ENCODE measurements at regions of chr4 and their contacts with region 1.

Region 1: DNA sequence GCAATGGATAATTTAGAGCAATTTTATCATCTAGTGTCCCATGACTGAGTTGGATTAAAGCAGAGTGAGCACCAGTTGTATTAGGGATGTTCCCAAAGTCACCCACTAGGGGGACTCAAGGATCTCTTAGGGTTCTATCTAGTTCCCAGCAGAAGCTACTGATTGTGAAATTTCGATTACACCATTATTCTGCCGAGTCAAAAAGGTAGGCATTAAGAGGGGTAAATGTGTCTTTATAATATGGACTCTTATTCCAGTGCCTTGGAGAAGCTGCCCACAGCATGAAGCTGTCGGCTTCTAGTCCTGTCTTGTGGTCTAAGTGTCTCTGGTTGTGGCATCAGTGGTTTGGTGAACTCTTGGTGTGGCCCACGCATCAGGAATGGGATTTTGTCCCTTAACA is 53.3 kb downstream of the RGS12 start:
- DNase-seq: peak in 5 of 9 experiments; percentile 22 to 76 (median 45)
- ATAC-seq: peak; percentile 67
- H3K4me3 ChIP-seq: no peak overlapping the region
- H3K4me3 Mint-ChIP-seq: no peak overlapping the region
- H3K27ac ChIP-seq: no peak overlapping the region
- H3K27ac Mint-ChIP-seq: no peak overlapping the region
- H3K4me1 ChIP-seq: peaks cover 19% of the 10 kb centered on the region
- H3K4me1 Mint-ChIP-seq: peaks cover 27% of the 10 kb centered on the region
- H3K27me3 ChIP-seq: no peaks in the 10 kb centered on the region
- H3K27me3 Mint-ChIP-seq: peaks cover 6% of the 10 kb centered on the region
- CTCF ChIP-seq: peak; percentile 89

Region 2: GRCh38 chr4:3091464-3091863 is 254.7 kb before region 1 on chr4:
- CTCF ChIA-PET with region 1: no interaction called
- POLR2A ChIA-PET with region 1: no interaction called
- intact Hi-C with region 1: no loop called
- DNase-seq: no peak
- ATAC-seq: no peak
- H3K4me3 ChIP-seq: no peak overlapping the region
- H3K4me3 Mint-ChIP-seq: no peak overlapping the region
- H3K27ac ChIP-seq: no peak overlapping the region
- H3K27ac Mint-ChIP-seq: no peak overlapping the region
- H3K4me1 ChIP-seq: no peaks in the 10 kb centered on the region
- H3K4me1 Mint-ChIP-seq: peaks cover 5% of the 10 kb centered on the region
- H3K27me3 ChIP-seq: no peaks in the 10 kb centered on the region
- H3K27me3 Mint-ChIP-seq: no peaks in the 10 kb centered on the region
- CTCF ChIP-seq: no peak

Region 3: GRCh38 chr4:3201718-3202702 is 144.1 kb before region 1 on chr4:
- CTCF ChIA-PET with region 1: interaction called, 6 read pairs
- POLR2A ChIA-PET with region 1: no interaction called
- intact Hi-C with region 1: loop called in 1 of 2 experiments (anchors 5 kb)
- DNase-seq: peak; percentile 36 to 92 (median 77)
- ATAC-seq: peak; percentile 95
- H3K4me3 ChIP-seq: peak overlapping the region; percentile 10 to 31
- H3K4me3 Mint-ChIP-seq: peak overlapping the region; percentile 70
- H3K27ac ChIP-seq: peak overlapping the region in 1 of 2 experiments; percentile 81
- H3K27ac Mint-ChIP-seq: peak overlapping the region; percentile 74
- H3K4me1 ChIP-seq: peaks cover 43% of the 10 kb centered on the region
- H3K4me1 Mint-ChIP-seq: peaks cover 56% of the 10 kb centered on the region
- H3K27me3 ChIP-seq: no peaks in the 10 kb centered on the region
- H3K27me3 Mint-ChIP-seq: no peaks in the 10 kb centered on the region
- CTCF ChIP-seq: no peak

Region 4: GRCh38 chr4:3369781-3370674 is 23.9 kb after region 1 on chr4:
- CTCF ChIA-PET with region 1: interaction called, 10 read pairs
- POLR2A ChIA-PET with region 1: no interaction called
- intact Hi-C with region 1: no loop called
- DNase-seq: peak in 4 of 9 experiments; percentile 30 to 79 (median 48)
- ATAC-seq: peak; percentile 30
- H3K4me3 ChIP-seq: peak overlapping the region; percentile 21 to 34
- H3K4me3 Mint-ChIP-seq: peak overlapping the region; percentile 75
- H3K27ac ChIP-seq: no peak overlapping the region
- H3K27ac Mint-ChIP-seq: no peak overlapping the region
- H3K4me1 ChIP-seq: peaks cover 28% of the 10 kb centered on the region
- H3K4me1 Mint-ChIP-seq: peaks cover 35% of the 10 kb centered on the region
- H3K27me3 ChIP-seq: peaks cover 9 to 12% of the 10 kb centered on the region in 2 experiments
- H3K27me3 Mint-ChIP-seq: peaks cover 21% of the 10 kb centered on the region
- CTCF ChIP-seq: no peak

Region 5: GRCh38 chr4:3480528-3481112 is 134.5 kb after region 1 on chr4:
- CTCF ChIA-PET with region 1: interaction called, 3 read pairs
- POLR2A ChIA-PET with region 1: no interaction called
- intact Hi-C with region 1: loop called (anchors 1 kb)
- DNase-seq: peak; percentile 58 to 84 (median 68)
- ATAC-seq: peak; percentile 85
- H3K4me3 ChIP-seq: no peak overlapping the region
- H3K4me3 Mint-ChIP-seq: no peak overlapping the region
- H3K27ac ChIP-seq: no peak overlapping the region
- H3K27ac Mint-ChIP-seq: no peak overlapping the region
- H3K4me1 ChIP-seq: peaks cover 13% of the 10 kb centered on the region
- H3K4me1 Mint-ChIP-seq: peaks cover 2% of the 10 kb centered on the region
- H3K27me3 ChIP-seq: peaks cover 12 to 13% of the 10 kb centered on the region in 2 experiments
- H3K27me3 Mint-ChIP-seq: peaks cover 13% of the 10 kb centered on the region
- CTCF ChIP-seq: peak; percentile 77

Region 6: GRCh38 chr4:4260253-4260652 is 914.1 kb after region 1 on chr4:
- CTCF ChIA-PET with region 1: no interaction called
- POLR2A ChIA-PET with region 1: no interaction called
- intact Hi-C with region 1: no loop called
- DNase-seq: peak in 3 of 9 experiments; percentile 16 to 86 (median 81)
- ATAC-seq: peak; percentile 100
- H3K4me3 ChIP-seq: no peak overlapping the region
- H3K4me3 Mint-ChIP-seq: no peak overlapping the region
- H3K27ac ChIP-seq: no peak overlapping the region
- H3K27ac Mint-ChIP-seq: peak overlapping the region; percentile 56
- H3K4me1 ChIP-seq: no peaks in the 10 kb centered on the region
- H3K4me1 Mint-ChIP-seq: peaks cover 13% of the 10 kb centered on the region
- H3K27me3 ChIP-seq: no peaks in the 10 kb centered on the region
- H3K27me3 Mint-ChIP-seq: no peaks in the 10 kb centered on the region
- CTCF ChIP-seq: peak; percentile 86

Measured in CD8-positive, alpha-beta T cell (primary cell).